Head of caudate nucleus (tissue), 42 donors: ENCODE measurements at regions of chr1 and their contacts with region 1.

Region 1: GRCh38 chr1:182789138-182790076 is at the start of gene NPL:
- DNase-seq: peak; percentile 65 to 94 (median 88)

Region 2: GRCh38 chr1:182601416-182601786 is 188.0 kb before region 1 on chr1:
- intact Hi-C with region 1: loop called (anchors 2 kb)
- DNase-seq: peak in 39 of 42 donors; percentile 12 to 89 (median 68)

Region 3: GRCh38 chr1:182839209-182840065 is 50.0 kb after region 1 on chr1 and contains the start of gene DHX9:
- intact Hi-C with region 1: loop called (anchors 10 kb)
- DNase-seq: peak; percentile 88 to 97 (median 94)